Activated naive CD4-positive, alpha-beta T cell treated with anti-CD3 and anti-CD28 coated beads for 36 hours (primary cell): ENCODE measurements at regions of chr6 and their contacts with region 1.

Region 1: DNA sequence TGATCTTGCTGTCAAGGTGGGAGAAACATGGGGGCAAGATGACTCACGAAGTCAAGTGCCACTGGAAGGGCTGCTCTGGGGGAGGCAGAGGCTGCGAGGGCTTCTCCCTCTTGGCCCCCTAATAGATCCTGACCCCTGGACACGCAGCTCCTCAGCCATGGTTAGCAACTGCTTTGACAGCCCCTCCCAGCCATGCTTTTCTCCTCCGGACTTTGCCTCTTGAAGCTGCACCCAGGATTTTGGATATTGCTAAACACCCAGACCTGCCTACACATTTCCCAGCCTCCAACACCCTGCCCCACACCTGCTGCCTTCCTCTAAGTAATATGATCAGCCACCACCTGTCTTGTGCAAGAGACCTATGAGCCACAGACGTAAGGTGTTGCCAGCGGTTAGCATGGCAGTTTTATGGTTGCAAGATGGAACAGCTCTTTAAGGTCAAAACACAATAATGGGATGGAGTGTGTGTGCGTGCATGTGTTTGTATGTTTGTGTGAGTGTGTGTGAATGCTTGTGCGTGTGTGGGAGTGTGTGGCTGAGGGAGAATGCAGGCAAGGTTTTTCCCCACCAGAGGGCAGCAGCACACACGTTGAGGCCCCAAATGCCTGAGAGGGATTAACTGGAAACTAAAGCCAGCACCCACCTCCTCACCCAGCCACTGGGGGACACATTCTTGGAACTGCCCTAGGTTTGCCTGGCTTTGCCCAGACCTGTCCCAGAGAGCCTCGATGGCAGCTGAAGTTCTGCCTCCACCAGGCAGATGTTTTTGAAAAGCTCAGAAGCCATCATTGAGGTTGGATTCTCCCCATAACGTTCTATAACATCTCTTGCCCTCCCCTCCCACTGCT is 2.5 kb downstream of the IP6K3 start:
- DNase-seq: peak; percentile 83
- H3K4me3 Mint-ChIP-seq: no peak overlapping the region
- H3K27ac Mint-ChIP-seq: no peak overlapping the region
- H3K4me1 Mint-ChIP-seq: peaks cover 2% of the 10 kb centered on the region
- H3K27me3 Mint-ChIP-seq: no peaks in the 10 kb centered on the region

Region 2: GRCh38 chr6:32984605-32985389 is 759.4 kb before region 1 on chr6:
- CTCF ChIA-PET with region 1: no interaction called
- intact Hi-C with region 1: no loop called
- DNase-seq: peak; percentile 97
- H3K4me3 Mint-ChIP-seq: no peak overlapping the region
- H3K27ac Mint-ChIP-seq: no peak overlapping the region
- H3K4me1 Mint-ChIP-seq: peaks cover 14% of the 10 kb centered on the region
- H3K27me3 Mint-ChIP-seq: no peaks in the 10 kb centered on the region

Region 3: DNA sequence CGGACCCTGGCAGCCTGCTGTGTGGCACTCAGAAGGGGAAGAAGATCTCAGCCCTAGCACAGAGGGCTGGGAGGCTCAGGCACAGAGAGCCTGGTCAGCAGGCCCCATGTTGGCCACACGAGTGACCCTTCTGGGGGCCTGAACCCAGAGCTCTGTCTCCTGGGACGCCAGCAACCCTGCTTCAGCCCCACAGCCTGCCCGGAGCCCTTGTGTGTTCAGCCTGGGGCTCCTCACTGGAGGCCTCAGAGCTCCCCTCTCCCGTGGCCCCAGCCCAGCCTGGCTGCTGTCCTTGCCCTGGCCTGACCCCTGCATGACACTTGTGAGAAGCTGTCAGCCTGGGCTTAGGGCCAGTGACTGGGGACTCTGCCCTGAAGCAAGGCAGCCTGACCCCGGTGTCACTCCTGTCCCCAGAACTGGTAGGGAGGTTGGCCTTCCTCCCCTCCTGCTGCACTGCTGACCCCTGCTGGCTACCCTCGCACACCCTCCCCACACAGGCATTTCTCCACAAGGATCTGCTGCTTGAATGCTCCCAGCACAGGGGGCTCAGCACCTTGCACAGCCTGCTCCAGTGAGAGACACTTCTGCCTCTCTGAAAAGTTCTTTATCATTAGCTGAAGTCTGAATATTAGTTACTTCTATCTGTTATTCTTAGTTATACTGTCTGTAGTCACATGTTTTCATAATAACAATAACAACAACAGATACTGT is 17.9 kb after region 1 on chr6:
- CTCF ChIA-PET with region 1: interaction called, 6 read pairs
- intact Hi-C with region 1: loop called (anchors 1 kb)
- DNase-seq: peak; percentile 73
- H3K4me3 Mint-ChIP-seq: no peak overlapping the region
- H3K27ac Mint-ChIP-seq: no peak overlapping the region
- H3K4me1 Mint-ChIP-seq: no peaks in the 10 kb centered on the region
- H3K27me3 Mint-ChIP-seq: no peaks in the 10 kb centered on the region

Region 4: DNA sequence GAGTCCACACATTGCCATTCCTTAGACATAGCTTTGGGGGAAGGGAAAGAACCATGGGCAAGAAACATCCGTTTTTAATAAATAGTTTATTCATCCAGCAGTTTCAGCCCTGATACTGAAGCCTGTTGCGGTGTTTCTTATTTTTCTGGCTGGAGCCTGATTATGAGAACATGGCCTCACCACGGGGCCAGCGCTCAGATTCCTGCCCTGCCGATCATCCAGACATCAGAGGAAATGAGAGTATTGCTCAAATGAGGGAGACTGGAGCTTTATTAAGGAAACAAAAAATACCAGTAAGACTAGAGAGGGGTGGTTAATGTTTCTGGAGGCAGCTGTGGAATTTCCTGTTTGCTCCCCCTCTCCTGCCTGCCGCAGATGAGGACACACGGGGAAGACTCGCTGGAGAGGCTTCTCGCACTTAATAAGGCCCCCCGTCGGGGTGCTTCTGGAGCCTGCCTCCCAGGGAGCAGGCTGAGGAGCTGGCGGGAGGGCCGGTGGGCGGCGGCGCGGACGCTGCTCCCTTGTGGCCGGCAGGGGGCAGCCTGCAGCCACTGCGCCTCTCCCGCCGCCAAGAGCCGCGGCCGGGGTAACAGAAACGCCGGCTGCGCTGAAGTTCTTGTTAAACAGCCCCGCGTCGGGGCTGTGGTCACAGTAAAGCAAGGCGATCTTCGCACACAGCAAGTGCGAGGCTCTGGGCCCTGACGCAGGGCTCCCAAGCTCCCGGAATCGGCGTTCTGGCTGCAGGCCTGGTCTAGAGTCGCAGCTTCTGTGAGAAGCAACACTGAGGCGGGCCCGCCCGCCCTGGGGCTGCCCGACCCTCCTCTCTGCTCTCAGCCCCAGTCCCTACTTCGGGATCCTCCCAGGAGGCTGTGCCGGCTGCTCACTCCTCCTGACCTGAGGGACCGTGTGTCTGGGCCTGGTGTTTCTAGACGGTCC is 27.2 kb after region 1 on chr6:
- CTCF ChIA-PET with region 1: interaction called, 7 read pairs
- intact Hi-C with region 1: loop called (anchors 2 kb)
- DNase-seq: peak; percentile 63
- H3K4me3 Mint-ChIP-seq: no peak overlapping the region
- H3K27ac Mint-ChIP-seq: no peak overlapping the region
- H3K4me1 Mint-ChIP-seq: peaks cover 3% of the 10 kb centered on the region
- H3K27me3 Mint-ChIP-seq: no peaks in the 10 kb centered on the region

Region 5: GRCh38 chr6:33812669-33813068 is 68.4 kb after region 1 on chr6:
- CTCF ChIA-PET with region 1: no interaction called
- intact Hi-C with region 1: no loop called
- DNase-seq: peak; percentile 57
- H3K4me3 Mint-ChIP-seq: no peak overlapping the region
- H3K27ac Mint-ChIP-seq: no peak overlapping the region
- H3K4me1 Mint-ChIP-seq: peaks cover 7% of the 10 kb centered on the region
- H3K27me3 Mint-ChIP-seq: peaks cover 36% of the 10 kb centered on the region

Region 6: GRCh38 chr6:34027445-34027936 is 283.3 kb after region 1 on chr6:
- CTCF ChIA-PET with region 1: interaction called, 15 read pairs
- intact Hi-C with region 1: loop called (anchors 1 kb)
- DNase-seq: peak; percentile 63
- H3K4me3 Mint-ChIP-seq: no peak overlapping the region
- H3K27ac Mint-ChIP-seq: no peak overlapping the region
- H3K4me1 Mint-ChIP-seq: no peaks in the 10 kb centered on the region
- H3K27me3 Mint-ChIP-seq: no peaks in the 10 kb centered on the region

Region 7: GRCh38 chr6:34055223-34055933 is 311.2 kb after region 1 on chr6:
- CTCF ChIA-PET with region 1: interaction called, 4 read pairs
- intact Hi-C with region 1: loop called (anchors 1 kb)
- DNase-seq: peak; percentile 75
- H3K4me3 Mint-ChIP-seq: no peak overlapping the region
- H3K27ac Mint-ChIP-seq: no peak overlapping the region
- H3K4me1 Mint-ChIP-seq: no peaks in the 10 kb centered on the region
- H3K27me3 Mint-ChIP-seq: peaks cover 2% of the 10 kb centered on the region

Region 8: DNA sequence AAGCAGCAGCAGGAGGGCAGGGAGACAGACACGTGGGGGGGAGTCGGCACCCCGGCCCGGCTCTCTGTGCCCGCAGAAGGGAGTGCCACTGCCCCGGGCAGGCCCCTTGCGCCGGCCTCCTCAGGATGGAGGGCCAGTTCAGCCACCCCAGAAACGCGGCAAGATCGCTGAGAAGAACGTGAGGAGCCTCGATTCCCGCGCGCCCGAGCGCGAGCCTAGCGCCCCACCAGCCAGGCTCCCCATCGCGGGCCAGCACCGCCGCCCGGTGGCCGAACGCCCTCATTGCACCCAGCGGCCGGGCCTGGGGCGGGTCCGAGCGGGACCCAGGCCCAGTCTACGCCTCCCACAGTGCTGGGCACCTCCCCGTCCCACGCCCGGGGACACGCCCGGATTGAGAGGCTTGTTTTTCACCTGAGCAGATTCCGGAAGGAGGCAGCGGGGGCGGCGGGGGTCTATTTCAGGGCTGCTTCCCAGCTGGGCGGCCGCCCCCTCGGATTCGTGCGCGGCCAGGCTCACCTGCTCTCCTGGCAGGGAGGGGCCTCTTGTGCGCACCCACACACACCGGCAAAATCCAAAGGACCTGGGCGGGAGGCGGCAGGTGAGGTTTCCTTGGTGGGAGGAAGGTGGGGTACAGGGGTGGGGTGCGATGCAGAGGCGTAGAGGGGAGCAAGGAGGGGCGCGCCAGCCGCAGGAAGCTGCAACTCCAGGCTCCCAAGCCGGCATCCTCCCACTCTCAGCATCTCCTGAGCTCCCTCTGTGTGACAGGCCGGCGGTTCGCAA is 410.6 kb after region 1 on chr6:
- CTCF ChIA-PET with region 1: interaction called, 4 read pairs
- intact Hi-C with region 1: loop called (anchors 10 kb)
- DNase-seq: peak; percentile 67
- H3K4me3 Mint-ChIP-seq: no peak overlapping the region
- H3K27ac Mint-ChIP-seq: no peak overlapping the region
- H3K4me1 Mint-ChIP-seq: peaks cover 8% of the 10 kb centered on the region
- H3K27me3 Mint-ChIP-seq: peaks cover 35% of the 10 kb centered on the region